ENCODE measurements at regions of chr4 and their contacts with region 1.

Region 1: DNA sequence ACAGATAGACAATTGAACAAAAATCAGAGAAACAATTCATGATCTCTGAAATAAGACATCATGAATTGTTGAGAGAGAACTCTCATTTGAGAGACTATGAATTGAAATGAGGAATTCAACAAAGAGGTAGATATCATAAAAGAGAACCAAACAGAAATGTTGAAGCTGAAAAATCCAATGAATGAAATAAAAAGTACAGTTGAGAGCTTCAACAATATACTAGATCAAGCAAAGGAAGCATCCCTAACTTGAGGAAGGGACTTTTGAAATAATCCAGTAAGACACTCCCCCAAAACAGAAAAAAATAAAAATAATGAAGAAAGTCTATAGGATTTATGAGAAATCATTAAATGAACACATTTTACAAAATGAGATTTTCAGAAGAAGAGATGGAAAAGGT is 310.0 kb upstream of the PCDH10 start:
- DNase-seq: no peak
- ATAC-seq: no peak
- H3K4me3 ChIP-seq: no peak overlapping the region
- H3K27ac ChIP-seq: no peak overlapping the region
- H3K4me1 ChIP-seq: no peaks in the 10 kb centered on the region
- H3K27me3 ChIP-seq: no peaks in the 10 kb centered on the region
- CTCF ChIP-seq: no peak

Region 2: GRCh38 chr4:132824761-132825160 is 14.3 kb before region 1 on chr4:
- intact Hi-C with region 1: loop called in 1 of 2 experiments (anchors 1 kb)
- DNase-seq: no peak
- ATAC-seq: no peak
- H3K4me3 ChIP-seq: no peak overlapping the region
- H3K27ac ChIP-seq: no peak overlapping the region
- H3K4me1 ChIP-seq: no peaks in the 10 kb centered on the region
- H3K27me3 ChIP-seq: no peaks in the 10 kb centered on the region
- CTCF ChIP-seq: no peak

Region 3: GRCh38 chr4:134668237-134668636 is 1829.2 kb after region 1 on chr4:
- intact Hi-C with region 1: no loop called
- DNase-seq: no peak
- ATAC-seq: no peak
- H3K4me3 ChIP-seq: no peak overlapping the region
- H3K27ac ChIP-seq: no peak overlapping the region
- H3K4me1 ChIP-seq: no peaks in the 10 kb centered on the region
- H3K27me3 ChIP-seq: no peaks in the 10 kb centered on the region
- CTCF ChIP-seq: no peak

Measured in psoas muscle (tissue), 8 donors.